ENCODE measurements at regions of chr19 and their contacts with region 1.

Region 1: DNA sequence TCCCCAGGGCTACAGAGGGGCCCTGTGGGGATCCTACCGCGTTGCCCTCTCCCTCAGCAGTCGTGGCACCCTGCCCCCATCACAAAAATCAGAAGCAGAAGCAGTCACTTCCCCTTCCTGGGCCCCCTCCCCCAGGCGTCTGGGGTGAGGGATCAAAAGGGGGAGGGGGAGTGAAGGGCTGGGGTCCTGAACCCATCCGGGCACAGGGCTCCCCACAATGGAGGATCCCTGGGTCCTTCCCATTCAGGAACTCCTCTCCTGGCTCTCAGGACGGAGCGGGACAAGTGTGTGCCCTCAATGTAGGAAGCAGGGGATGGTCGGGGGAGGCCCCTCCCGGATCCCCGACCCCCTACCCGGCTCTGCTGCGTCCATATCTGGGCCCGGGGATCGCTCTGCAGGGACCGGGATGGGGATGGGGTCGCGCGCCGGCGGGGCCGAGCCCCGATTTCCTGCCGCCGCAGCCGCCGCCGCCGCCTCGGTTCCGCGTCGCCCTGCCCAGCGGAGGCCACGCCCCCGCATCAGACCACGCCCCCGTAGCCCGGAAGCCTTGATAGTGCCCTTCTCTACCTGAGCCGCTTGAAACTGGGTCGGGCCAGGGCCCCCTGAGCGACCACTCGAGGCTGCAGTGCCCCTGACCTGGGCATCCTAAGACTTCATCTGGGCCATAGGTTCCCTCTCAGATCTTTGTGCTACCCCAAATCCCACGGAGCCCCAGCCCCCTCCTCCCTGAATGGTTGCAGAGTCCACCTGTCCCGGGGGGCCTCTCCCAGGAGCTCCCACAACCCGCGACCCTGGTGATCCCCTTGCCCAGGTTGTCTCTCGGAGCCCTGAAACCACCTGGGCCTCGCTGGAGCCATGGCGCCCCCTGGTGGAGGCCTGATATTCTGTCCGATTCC is at the start of gene GMIP:
- DNase-seq: peak; percentile 89
- H3K4me3 Mint-ChIP-seq: peak within 1 kb of the TSS; percentile 99
- H3K27ac Mint-ChIP-seq: peak within 1 kb of the TSS; percentile 98
- H3K4me1 Mint-ChIP-seq: peaks cover 12% of the 10 kb centered on the region
- H3K27me3 Mint-ChIP-seq: no peaks in the 10 kb centered on the region
- total RNA-seq, gene GMIP: 78.6 to 79.4 TPM

Region 2: GRCh38 chr19:19591133-19591825 is 52.1 kb before region 1 on chr19:
- CTCF ChIA-PET with region 1: interaction called, 4 read pairs
- POLR2A ChIA-PET with region 1: no interaction called
- intact Hi-C with region 1: loop called (anchors 2 kb)
- DNase-seq: peak; percentile 89
- H3K4me3 Mint-ChIP-seq: peak overlapping the region; percentile 60
- H3K27ac Mint-ChIP-seq: peak overlapping the region; percentile 100
- H3K4me1 Mint-ChIP-seq: peaks cover 72% of the 10 kb centered on the region
- H3K27me3 Mint-ChIP-seq: no peaks in the 10 kb centered on the region

Region 3: GRCh38 chr19:19597809-19598306 is 45.5 kb before region 1 on chr19:
- CTCF ChIA-PET with region 1: interaction called, 4 read pairs
- POLR2A ChIA-PET with region 1: no interaction called
- intact Hi-C with region 1: loop called (anchors 2 kb)
- DNase-seq: peak; percentile 74
- H3K4me3 Mint-ChIP-seq: peak overlapping the region; percentile 75
- H3K27ac Mint-ChIP-seq: peak overlapping the region; percentile 100
- H3K4me1 Mint-ChIP-seq: peaks cover 81% of the 10 kb centered on the region
- H3K27me3 Mint-ChIP-seq: no peaks in the 10 kb centered on the region

Region 4: DNA sequence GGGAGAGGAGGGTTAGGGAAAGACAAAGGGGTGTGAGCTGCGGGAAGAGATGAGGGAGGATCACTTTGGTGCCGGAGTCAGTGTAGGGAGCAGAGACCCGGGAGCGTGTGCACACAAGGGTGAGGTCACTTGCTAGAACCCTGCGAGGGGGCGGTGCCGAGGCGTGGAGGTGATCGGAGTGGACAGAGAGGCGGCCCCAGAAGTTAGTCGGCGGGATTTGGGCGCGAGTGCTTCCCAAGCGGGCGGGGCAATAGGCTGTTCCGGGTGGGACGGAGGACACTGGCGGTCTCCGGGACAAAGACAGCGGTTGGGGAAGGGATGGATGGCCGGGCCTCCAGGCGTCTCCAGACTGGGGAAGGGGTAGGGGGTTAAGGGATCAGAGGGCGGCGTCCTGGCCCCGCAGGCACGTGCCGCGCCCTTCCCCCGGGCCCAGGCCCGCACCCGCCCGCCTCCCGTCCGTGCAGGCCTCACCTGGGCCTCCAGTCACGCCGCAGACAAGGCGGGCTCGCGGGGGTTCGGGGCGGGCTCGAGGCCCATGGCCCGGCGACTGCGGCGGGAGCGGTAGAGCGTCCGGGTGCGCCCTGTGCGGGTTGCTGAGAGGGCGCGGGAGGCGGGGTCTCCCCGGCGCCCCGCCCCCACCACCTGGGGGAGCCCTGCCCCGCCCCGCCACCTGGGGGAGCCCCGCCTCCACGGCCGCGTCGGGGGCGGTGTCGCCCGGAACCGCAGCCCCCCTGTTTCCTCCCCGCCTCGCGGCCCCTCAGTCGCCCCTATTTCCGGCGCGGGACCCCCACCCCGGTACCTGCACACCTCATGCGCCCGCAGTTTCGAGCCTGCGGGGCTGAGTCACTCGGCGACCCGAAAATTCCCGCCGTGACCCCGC is 15.5 kb before region 1 on chr19 and contains the start of gene LPAR2:
- CTCF ChIA-PET with region 1: interaction called, 7 read pairs
- POLR2A ChIA-PET with region 1: interaction called, 3 read pairs
- intact Hi-C with region 1: loop called (anchors 2 kb)
- DNase-seq: peak; percentile 79
- H3K4me3 Mint-ChIP-seq: peak within 1 kb of the TSS; percentile 90
- H3K27ac Mint-ChIP-seq: peak within 1 kb of the TSS; percentile 93
- H3K4me1 Mint-ChIP-seq: peaks cover 20% of the 10 kb centered on the region
- H3K27me3 Mint-ChIP-seq: no peaks in the 10 kb centered on the region
- total RNA-seq, gene LPAR2: 32.5 to 33.1 TPM

Region 5: DNA sequence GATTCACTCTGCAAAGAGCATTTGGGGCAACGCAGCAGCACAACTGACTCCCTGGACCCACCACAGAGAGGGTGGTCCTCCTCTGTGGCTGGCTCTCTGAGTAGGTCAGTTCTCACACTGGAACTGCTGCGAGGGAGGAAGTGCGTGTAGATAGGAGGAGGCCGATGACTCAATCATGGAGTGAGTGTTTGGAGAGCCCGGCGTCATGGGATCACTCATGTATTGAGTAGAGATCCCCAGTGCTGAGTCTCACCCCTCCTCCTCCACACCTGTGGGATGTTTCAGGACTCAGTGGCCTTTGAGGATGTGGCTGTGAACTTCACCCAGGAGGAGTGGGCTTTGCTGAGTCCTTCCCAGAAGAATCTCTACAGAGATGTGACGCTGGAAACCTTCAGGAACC is 34.2 kb after region 1 on chr19:
- CTCF ChIA-PET with region 1: no interaction called
- POLR2A ChIA-PET with region 1: no interaction called
- intact Hi-C with region 1: no loop called
- DNase-seq: no peak
- H3K4me3 Mint-ChIP-seq: no peak overlapping the region
- H3K27ac Mint-ChIP-seq: peak overlapping the region; percentile 42
- H3K4me1 Mint-ChIP-seq: peaks cover 25% of the 10 kb centered on the region
- H3K27me3 Mint-ChIP-seq: no peaks in the 10 kb centered on the region

Measured in activated CD4-positive, alpha-beta memory T cell treated with anti-CD3 and anti-CD28 coated beads for 36 hours (primary cell).